Activated CD4-positive, alpha-beta memory T cell treated with anti-CD3 and anti-CD28 coated beads, Interleukin-2, amount 10 ng/mL, durations not matched to agents 7 days and 5 days (primary cell): ENCODE measurements at regions of chr5 and their contacts with region 1.

Region 1: DNA sequence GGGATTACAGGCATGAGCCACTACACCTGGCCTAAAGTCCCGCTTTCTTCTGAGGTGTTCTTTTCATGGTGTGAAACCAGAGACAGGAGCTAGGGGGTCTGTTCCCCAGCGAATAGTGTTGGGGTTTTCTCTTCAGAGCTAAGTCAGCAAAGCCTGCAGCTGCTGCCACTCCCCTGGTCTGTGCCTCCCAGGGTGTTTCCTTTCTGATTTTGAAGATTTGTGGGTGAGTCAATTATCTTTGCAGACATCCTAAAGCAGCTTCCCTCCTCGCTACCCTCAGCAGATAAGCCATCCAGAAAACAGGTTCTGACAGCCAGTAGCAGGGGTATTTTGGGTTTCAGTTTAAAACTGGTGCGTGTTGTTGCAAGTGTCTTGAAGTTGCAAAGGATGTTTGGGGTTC is 72.0 kb upstream of the IQGAP2 start:
- DNase-seq: peak; percentile 69
- H3K4me3 Mint-ChIP-seq: peak overlapping the region; percentile 19
- H3K27ac Mint-ChIP-seq: peak overlapping the region; percentile 95
- H3K4me1 Mint-ChIP-seq: peaks cover 77% of the 10 kb centered on the region
- H3K27me3 Mint-ChIP-seq: no peaks in the 10 kb centered on the region

Region 2: DNA sequence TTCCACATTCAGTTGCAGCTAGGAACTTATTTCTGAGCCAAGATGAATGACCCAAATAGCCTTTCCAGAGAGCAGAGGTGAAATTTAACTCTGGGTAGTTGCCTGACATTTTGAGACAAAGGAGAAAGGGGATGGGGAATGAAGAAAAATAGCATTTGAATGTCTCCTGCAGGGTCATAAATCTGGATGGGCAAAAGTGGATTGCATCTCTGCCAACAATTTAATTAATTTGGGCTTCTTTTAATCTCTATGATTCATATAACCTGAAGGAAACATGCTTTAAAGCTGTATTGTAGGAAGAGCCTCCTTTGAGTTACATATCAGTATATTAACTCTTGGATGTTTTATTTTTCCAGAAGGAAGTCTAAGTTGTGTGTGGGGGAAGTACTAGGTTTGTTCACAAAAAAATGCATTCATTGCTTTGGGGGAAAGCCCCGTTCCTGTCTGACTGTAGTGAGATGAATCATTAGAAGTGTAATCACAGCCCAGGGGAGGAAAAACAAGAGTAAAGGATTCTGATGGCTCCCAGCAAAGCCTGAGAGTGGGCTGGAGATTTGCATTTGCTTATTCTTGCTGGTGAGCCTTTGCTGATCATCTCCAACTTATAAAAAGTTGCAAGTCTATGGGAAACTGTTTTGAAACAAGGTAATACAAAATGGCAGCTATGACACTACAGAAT is 61.1 kb before region 1 on chr5:
- CTCF ChIA-PET with region 1: interaction called, 4 read pairs
- POLR2A ChIA-PET with region 1: interaction called, 33 read pairs
- DNase-seq: peak; percentile 26
- H3K4me3 Mint-ChIP-seq: peak overlapping the region; percentile 53
- H3K27ac Mint-ChIP-seq: peak overlapping the region; percentile 88
- H3K4me1 Mint-ChIP-seq: peaks cover 37% of the 10 kb centered on the region
- H3K27me3 Mint-ChIP-seq: no peaks in the 10 kb centered on the region

Region 3: DNA sequence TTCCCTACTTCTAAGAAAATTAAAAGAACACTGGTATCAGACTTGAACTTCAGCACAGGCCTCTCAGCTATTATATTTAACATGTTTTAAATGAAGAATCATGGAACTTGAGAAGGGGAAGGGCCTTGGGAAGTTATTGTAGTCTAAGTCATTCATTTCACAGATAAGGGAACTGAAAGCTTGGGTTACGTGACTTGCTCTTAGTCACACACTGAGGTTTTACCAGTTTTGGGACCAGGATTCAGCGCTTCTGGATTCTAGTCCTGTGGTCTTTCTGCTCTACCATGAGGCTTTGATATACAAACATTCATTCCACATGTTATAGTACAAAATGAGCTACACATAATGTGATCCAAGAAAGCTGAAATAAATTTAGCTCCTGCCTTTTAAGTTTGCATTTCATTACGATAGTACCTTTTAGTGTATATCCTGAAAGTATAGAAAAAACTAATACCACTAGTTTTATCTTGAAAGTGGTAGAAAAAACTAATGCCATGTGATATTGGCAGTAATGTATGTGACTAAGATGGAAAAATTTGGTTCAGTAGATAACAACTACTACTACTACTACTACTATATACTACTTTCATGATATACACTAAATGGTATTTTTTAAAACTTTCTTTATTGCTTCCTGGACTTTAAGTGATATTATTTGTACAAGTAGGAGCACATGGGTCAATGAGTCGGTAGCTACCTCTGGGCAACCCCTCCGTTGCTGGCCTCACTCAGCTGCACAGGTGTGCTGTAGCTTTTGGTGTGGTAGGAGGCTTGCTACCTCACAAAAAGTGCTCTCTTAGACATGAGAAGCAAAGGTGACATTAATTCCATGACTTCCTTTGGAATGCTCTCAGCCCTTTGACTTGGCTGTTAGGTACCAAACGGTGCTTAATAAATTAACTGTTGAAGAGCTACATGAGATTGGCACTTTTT is 251.4 kb after region 1 on chr5:
- CTCF ChIA-PET with region 1: interaction called, 14 read pairs
- POLR2A ChIA-PET with region 1: no interaction called
- DNase-seq: no peak
- H3K4me3 Mint-ChIP-seq: no peak overlapping the region
- H3K27ac Mint-ChIP-seq: peak overlapping the region; percentile 26
- H3K4me1 Mint-ChIP-seq: peaks cover 29% of the 10 kb centered on the region
- H3K27me3 Mint-ChIP-seq: no peaks in the 10 kb centered on the region